ENCODE measurements at regions of chr15 and their contacts with region 1.

Region 1: DNA sequence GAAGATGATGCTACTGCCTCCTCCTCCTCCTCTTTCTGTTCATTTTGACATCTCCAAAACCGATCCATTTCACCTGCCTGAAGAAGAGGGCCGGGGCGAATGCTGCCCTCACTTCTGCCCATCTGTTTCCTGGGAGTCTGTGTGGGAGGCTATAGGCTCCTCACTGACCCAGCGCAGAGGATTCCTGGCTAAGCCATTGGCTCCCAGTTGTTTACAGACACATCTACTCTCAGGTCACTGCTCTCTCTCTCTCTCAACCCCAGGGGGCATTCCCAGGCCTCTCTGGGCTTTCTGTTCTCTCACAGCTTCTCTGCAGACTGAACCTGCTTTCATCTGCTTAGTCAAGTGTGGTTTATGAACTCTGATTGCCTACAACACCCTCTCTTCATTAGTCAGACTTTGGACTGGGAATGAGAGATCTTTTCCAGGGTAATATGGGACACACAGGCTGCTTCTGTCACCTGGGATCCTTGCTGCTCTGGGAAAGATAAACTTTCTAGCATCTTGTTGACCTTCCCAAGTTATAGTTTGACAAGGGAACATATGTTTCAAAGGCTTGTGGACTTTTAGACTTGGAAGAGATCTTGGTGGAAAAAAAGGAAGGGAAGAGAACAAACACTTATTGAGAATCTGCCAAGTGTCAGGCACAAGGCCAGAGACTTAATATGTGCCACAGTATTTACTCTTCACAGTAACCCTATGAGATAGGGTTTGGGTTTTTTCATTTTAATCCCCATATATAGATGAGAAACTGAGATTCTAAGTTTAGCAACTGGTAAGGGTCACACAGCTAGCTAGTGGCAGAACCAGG is 30.2 kb upstream of the USP3 start:
- DNase-seq: peak in 8 of 10 donors; percentile 17 to 69 (median 52)
- ATAC-seq: peak; percentile 80 to 87
- H3K4me3 Mint-ChIP-seq: peak overlapping the region in 9 of 10 donors; percentile 37 to 88 (median 73)
- H3K27ac Mint-ChIP-seq: peak overlapping the region; percentile 95 to 99 (median 96)
- H3K4me1 Mint-ChIP-seq: peaks cover 25 to 69% (median 60%) of the 10 kb centered on the region in 4 donors
- H3K27me3 Mint-ChIP-seq: no peaks in the 10 kb centered on the region

Region 2: DNA sequence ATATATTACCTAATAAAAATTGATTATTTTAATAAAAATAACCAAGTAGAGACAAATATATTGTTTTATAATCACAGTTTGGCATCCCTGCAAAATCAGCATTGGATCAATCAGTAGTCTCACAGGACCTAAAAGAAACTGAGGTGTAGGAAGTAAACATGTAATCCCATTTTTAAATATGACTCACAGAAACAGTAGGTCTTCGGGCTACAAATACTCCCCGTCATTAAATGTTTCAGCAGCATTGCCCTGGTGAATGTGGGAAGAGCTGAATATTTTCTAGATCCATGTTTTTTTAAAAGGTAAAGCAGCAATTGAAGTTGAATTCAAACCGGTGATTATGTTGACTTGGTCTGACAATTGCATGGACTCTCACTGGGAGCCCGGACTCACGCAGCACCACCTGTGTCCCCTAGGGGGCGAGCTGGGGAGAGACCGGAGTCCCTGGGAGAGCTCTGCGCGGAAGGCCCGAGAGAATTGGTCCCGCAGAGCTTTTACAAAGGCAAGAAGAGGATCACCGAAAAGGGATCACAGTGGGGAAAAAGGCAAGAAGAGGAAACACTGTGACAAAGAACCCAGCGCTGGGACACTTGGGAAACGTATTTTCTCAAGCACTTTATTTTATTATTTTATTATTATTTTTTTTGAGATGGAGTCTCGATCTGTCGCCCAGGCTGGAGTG is 13.0 kb after region 1 on chr15:
- POLR2A ChIA-PET with region 1: interaction called, 11 read pairs
- DNase-seq: peak; percentile 73 to 94 (median 85)
- ATAC-seq: peak; percentile 88 to 94
- H3K4me3 Mint-ChIP-seq: peak overlapping the region; percentile 29 to 82 (median 69)
- H3K27ac Mint-ChIP-seq: peak overlapping the region; percentile 77 to 96 (median 88)
- H3K4me1 Mint-ChIP-seq: peaks cover 20 to 84% (median 64%) of the 10 kb centered on the region in 4 donors
- H3K27me3 Mint-ChIP-seq: no peaks in the 10 kb centered on the region

Region 3: GRCh38 chr15:63530752-63531299 is 56.6 kb after region 1 on chr15:
- POLR2A ChIA-PET with region 1: no interaction called
- DNase-seq: peak in 1 of 10 donors; percentile 20
- ATAC-seq: peak; percentile 48 to 51
- H3K4me3 Mint-ChIP-seq: peak overlapping the region in 9 of 10 donors; percentile 26 to 74 (median 53)
- H3K27ac Mint-ChIP-seq: peak overlapping the region in 8 of 10 donors; percentile 1 to 80 (median 64)
- H3K4me1 Mint-ChIP-seq: peaks cover 37 to 95% (median 85%) of the 10 kb centered on the region in 4 donors
- H3K27me3 Mint-ChIP-seq: no peaks in the 10 kb centered on the region